ENCODE measurements at regions of chr19 and their contacts with region 1.

Region 1: DNA sequence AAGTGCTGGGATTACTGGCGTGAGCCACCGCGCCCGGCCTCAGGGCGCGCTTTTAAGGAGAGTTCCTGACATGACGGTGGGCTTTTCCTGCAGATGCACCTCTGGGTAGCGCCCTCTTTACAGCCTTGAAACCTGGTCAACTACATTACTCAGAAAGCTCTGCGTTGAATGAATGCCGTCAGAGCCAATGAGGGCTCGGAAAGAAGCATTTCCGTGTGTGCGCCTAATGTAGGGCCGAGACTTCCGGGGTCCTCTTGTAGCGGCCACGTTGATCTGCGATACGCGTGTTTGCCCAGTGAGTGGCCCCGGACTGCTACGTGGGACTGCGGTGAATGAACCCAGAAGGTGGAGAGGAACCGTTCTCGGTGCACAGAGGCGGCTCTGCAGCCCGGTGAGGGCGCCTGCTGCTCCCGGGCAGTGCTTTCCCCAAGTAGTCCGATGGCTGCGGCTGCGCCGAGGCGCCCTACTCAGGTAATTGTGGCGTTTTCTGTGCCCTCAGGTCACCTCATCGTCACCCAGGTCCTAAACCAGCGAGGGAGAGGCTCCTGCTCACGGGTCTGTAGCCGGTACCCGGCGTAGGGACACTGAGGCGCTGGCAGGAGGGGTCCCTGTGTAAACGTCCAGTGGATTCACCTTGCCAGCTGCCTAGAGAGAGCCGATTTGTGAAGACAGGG is 4.9 kb upstream of the ZNF552 start:
- DNase-seq: peak; percentile 87
- ATAC-seq: peak; percentile 89

Region 2: GRCh38 chr19:57759096-57759495 is 60.5 kb before region 1 on chr19:
- intact Hi-C with region 1: no loop called
- DNase-seq: no peak
- ATAC-seq: no peak

Region 3: GRCh38 chr19:57769345-57770131 is 50.1 kb before region 1 on chr19 and contains the start of gene ZNF586:
- intact Hi-C with region 1: loop called (anchors 5 kb)
- DNase-seq: peak; percentile 96
- ATAC-seq: peak; percentile 98
- total RNA-seq, gene ZNF586: 9.7 TPM

Region 4: GRCh38 chr19:57803594-57804325 is 15.9 kb before region 1 on chr19:
- intact Hi-C with region 1: loop called (anchors 1 kb)
- DNase-seq: no peak
- ATAC-seq: peak; percentile 48

Region 5: DNA sequence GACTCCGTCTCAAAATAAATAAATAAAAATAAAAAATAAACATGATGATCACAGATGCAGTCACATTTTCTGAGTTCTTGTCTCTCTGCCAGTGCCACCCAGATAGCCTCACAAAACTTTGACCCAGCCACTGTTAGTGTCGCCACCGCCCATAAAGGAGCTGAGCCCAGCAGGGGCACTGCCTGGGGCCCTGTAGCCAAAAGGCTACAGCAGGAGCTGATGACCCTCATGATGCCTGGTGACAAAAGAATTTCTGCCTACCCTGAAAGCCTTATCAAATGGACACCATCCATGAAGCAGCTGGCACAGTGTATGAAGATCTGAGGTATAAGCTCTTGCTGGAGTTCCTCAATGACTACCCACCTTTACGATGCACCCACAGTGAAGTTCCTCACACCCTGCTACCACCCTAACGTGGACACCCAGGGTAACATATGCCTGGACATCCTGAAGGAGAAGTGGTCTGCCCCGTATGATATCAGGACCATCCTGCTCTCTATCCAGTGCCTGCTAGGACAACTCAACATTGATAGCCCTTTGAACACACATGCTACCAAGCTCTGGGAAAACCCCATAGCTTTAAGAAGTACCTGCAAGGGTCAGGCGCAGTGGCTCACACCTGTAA is 48.4 kb after region 1 on chr19:
- intact Hi-C with region 1: no loop called
- DNase-seq: no peak
- ATAC-seq: no peak